CD4-positive, alpha-beta T cell (primary cell): ENCODE measurements at regions of chr14 and their contacts with region 1.

Region 1: GRCh38 chr14:89973234-89973823 is 17.6 kb downstream of the TDP1 start:
- DNase-seq: peak in 13 of 14 experiments; percentile 10 to 70 (median 39)
- ATAC-seq: peak; percentile 54
- H3K4me3 ChIP-seq: no peak overlapping the region
- H3K4me3 Mint-ChIP-seq: no peak overlapping the region
- H3K27ac ChIP-seq: no peak overlapping the region
- H3K27ac Mint-ChIP-seq: no peak overlapping the region
- H3K4me1 ChIP-seq: no peaks in the 10 kb centered on the region
- H3K4me1 Mint-ChIP-seq: peaks cover 10% of the 10 kb centered on the region
- H3K27me3 ChIP-seq: no peaks in the 10 kb centered on the region
- H3K27me3 Mint-ChIP-seq: no peaks in the 10 kb centered on the region
- CTCF ChIP-seq: peak; percentile 87

Region 2: DNA sequence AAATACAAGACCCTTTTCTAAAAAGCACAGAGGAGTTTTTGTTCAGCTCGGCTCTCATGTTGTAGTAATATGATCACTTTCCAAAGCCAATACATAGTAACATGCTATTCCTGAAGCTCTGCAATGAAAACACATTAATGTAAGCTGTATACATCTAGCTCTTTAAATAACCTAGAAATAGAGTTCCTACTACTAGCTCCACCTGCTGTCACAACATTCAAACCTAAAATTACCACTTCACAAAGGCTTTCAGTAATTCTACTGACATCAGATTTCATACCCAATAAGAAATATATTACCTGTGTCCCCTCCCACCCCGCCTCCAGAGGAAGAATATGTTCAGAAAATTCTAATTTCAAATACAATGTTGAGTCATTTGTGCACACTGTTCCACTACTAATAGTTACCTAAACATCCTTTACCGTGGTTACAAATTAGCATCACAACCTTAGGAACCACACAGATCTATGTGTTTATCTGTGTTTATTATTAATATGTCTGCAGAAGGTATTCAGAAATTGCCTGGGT is 36.6 kb before region 1 on chr14:
- CTCF ChIA-PET with region 1: interaction called, 18 read pairs
- POLR2A ChIA-PET with region 1: interaction called, 3 read pairs
- intact Hi-C with region 1: loop called (anchors 5 kb)
- DNase-seq: no peak
- ATAC-seq: no peak
- H3K4me3 ChIP-seq: no peak overlapping the region
- H3K4me3 Mint-ChIP-seq: no peak overlapping the region
- H3K27ac ChIP-seq: no peak overlapping the region
- H3K27ac Mint-ChIP-seq: no peak overlapping the region
- H3K4me1 ChIP-seq: no peaks in the 10 kb centered on the region
- H3K4me1 Mint-ChIP-seq: no peaks in the 10 kb centered on the region
- H3K27me3 ChIP-seq: no peaks in the 10 kb centered on the region
- H3K27me3 Mint-ChIP-seq: no peaks in the 10 kb centered on the region
- CTCF ChIP-seq: no peak

Region 3: GRCh38 chr14:89959853-89960445 is 13.4 kb before region 1 on chr14:
- CTCF ChIA-PET with region 1: interaction called, 17 read pairs
- POLR2A ChIA-PET with region 1: interaction called, 12 read pairs
- intact Hi-C with region 1: no loop called
- DNase-seq: peak in 3 of 14 experiments; percentile 35 to 58 (median 45)
- ATAC-seq: no peak
- H3K4me3 ChIP-seq: no peak overlapping the region
- H3K4me3 Mint-ChIP-seq: peak overlapping the region; percentile 76
- H3K27ac ChIP-seq: peak overlapping the region in 1 of 2 donors; percentile 31
- H3K27ac Mint-ChIP-seq: peak overlapping the region; percentile 37
- H3K4me1 ChIP-seq: peaks cover 50% of the 10 kb centered on the region
- H3K4me1 Mint-ChIP-seq: peaks cover 72% of the 10 kb centered on the region
- H3K27me3 ChIP-seq: no peaks in the 10 kb centered on the region
- H3K27me3 Mint-ChIP-seq: no peaks in the 10 kb centered on the region
- CTCF ChIP-seq: no peak